ENCODE measurements at regions of chr18 and their contacts with region 1.

Region 1: DNA sequence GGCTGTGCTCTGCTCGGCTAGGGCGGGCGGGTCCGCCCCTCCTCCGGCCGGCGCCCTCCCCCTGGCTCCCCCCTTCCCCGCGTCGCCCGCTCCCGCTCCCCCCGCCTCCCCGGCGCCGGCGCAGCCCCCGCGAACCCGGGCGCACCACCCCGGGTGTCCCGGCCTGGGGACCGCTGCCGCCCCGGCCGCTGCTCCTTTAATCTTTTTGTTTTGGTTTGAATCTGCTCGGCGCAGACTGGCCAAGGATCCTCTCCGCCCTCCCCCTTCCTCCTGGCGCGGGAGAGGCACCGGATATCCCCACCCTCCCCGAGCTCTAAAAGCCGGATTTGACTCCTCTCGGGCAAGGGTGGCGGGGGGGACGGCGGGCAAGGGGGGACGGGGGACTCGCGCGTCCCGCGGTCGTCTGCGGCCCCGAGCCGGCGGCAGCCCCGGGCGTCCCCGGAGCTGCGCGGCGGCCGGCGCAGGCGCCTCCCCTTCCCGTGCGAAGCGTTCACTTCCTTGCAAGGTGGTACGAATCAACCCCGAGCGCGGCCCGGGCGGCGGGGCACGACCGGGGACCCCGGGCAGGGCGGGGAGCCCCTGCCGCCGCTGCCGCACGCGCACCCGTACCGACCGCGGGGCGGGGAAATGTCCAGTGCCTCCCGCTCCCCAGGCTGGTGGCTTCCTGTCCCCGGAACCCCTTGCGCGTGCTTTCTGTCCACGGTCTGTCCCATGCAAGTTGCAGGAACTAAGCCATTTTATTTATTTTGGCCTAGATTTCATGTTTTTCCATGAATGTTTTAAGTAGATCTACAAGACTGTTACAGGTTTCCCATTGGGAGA is at the start of gene PTGR3:
- DNase-seq: peak; percentile 94
- H3K4me3 ChIP-seq: peak within 1 kb of the TSS; percentile 72 to 100 (median 86)
- H3K27ac ChIP-seq: peak within 1 kb of the TSS; percentile 98 to 99 (median 98)
- H3K4me1 ChIP-seq: peaks cover 0 to 62% (median 42%) of the 10 kb centered on the region in 4 donors
- H3K27me3 ChIP-seq: no peaks in the 10 kb centered on the region
- CTCF ChIP-seq: no peak
- EP300 ChIP-seq: no peak
- POLR2A ChIP-seq: no peak
- total RNA-seq, gene PTGR3: 24.3 to 33.8 (median 25.4) TPM

Region 2: GRCh38 chr18:74597662-74598349 is 611.5 kb before region 1 on chr18 and contains the start of gene ZNF407:
- intact Hi-C with region 1: loop called (anchors 5 kb)
- DNase-seq: peak; percentile 93
- H3K4me3 ChIP-seq: peak within 1 kb of the TSS; percentile 56 to 97 (median 78)
- H3K27ac ChIP-seq: peak within 1 kb of the TSS; percentile 92 to 99 (median 96)
- H3K4me1 ChIP-seq: peaks cover 0 to 41% (median 30%) of the 10 kb centered on the region in 4 donors
- H3K27me3 ChIP-seq: no peaks in the 10 kb centered on the region
- CTCF ChIP-seq: no peak
- EP300 ChIP-seq: no peak
- POLR2A ChIP-seq: peak in 1 of 2 donors; percentile 21
- total RNA-seq, gene ZNF407: 16.3 to 19.8 (median 18.1) TPM

Region 3: DNA sequence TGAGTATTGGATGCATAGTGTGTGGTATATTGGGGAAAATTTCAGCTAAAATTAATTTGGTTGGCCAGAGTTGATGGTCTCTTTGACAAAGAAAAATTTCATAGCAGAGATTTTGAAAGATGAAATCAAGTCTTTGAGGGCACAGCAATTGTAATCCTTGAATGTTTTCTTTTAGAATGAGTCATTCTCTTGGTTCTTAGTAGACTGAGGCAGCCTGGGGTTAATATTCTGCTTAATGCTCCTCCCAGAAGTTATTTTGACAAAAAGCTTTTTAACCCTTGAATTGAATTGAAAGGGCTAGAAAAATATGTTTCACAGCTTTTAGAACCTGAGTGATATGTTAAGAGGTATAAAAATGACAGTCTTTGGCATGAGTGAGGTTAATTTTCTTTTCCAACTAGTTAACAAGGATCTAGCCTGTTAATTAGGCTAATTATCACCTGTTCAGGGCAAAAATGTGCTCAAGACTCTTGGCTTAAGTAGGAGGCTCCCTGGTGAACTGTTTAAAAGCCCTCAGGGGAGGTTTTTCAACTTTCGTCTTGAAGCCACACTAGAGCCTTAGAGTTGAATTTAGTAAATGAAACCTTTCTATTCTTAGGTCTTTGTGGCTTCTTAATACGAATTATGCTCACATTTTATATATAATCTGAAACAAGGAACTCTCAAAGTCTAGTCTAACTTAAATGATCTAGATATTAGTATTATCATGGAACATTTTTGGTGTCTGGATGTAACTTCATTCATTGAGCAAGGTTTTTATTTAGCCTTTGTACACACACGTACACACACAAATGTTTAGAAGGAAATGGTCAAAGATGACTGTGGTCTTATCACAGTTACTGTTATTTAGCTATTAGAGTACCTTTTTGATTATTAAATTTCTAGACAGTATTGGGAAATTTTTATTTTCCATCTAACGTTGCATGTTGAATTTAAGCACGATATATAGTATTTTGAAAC is 339.2 kb before region 1 on chr18:
- intact Hi-C with region 1: loop called (anchors 10 kb)
- DNase-seq: no peak
- H3K4me3 ChIP-seq: no peak overlapping the region
- H3K27ac ChIP-seq: no peak overlapping the region
- H3K4me1 ChIP-seq: peaks cover 0 to 27% (median 0%) of the 10 kb centered on the region in 4 donors
- H3K27me3 ChIP-seq: no peaks in the 10 kb centered on the region
- CTCF ChIP-seq: no peak
- EP300 ChIP-seq: no peak
- POLR2A ChIP-seq: no peak

Region 4: DNA sequence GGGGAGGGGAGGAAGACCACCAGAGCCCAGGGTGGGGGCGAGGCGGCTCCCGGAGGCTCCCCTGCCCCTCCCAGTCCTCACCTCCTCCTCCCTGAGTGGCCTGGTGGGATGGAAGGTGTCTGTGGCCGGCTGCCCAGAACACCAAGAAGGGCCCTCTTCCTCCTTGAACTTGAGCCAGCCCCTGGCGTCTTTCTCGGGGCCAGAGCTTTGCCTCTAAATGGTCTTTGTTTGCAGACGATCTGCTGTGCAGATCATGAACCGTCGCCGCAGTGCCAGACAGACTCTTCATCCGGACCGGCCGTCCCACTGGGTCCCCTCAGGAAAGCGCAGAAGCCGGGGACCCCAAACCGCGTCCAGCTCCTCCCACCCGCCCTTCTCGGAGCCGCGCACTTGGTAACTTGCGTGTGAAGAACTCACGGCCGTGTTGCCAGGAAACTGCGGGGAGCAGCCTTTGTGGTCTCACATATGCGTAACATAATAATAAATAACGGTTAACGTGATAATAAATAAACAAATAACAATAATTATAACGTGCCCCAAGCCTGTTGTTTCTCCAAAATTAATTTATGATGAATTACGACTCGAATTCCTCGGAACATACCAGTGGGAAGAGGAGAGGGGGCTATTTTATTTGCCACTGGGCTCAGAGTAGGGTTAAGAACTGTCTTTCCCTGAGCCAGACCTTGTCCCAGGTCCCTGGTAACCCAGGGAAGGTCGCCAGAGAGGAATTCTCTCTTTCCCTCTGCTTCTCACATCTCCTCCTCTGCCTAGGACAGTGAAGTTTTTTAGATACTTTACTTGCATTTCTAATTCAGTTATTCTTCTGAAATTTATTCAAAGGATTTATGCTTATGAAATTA is 41.4 kb before region 1 on chr18:
- intact Hi-C with region 1: loop called (anchors 2 kb)
- DNase-seq: peak; percentile 94
- H3K4me3 ChIP-seq: peak overlapping the region; percentile 35 to 49 (median 42)
- H3K27ac ChIP-seq: peak overlapping the region; percentile 77 to 85 (median 82)
- H3K4me1 ChIP-seq: peaks cover 0 to 9% (median 0%) of the 10 kb centered on the region in 4 donors
- H3K27me3 ChIP-seq: no peaks in the 10 kb centered on the region
- CTCF ChIP-seq: no peak
- EP300 ChIP-seq: no peak
- POLR2A ChIP-seq: peak in 1 of 2 donors; percentile 10

Region 5: DNA sequence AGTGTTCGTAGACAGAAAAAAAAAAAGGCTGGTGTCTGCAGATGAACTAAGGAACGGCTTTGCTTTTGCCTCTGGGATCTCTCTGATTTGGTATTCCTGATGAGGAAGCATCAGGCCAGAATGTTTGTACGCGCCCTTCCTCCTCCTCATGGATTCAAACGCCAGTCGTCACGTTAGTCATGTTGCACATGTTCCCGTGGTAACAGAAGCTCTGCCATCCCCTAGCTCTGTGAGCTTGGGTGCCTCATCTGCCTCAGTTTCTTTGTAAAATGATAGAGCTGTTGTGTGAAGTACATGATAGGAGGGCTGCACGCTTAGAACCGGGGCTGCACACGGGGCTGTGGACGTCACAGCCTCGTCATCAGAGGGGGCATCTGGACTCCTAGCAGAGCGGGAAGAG is 48.3 kb after region 1 on chr18:
- intact Hi-C with region 1: no loop called
- DNase-seq: no peak
- H3K4me3 ChIP-seq: no peak overlapping the region
- H3K27ac ChIP-seq: no peak overlapping the region
- H3K4me1 ChIP-seq: peaks cover 0 to 73% (median 37%) of the 10 kb centered on the region in 4 donors
- H3K27me3 ChIP-seq: no peaks in the 10 kb centered on the region
- CTCF ChIP-seq: no peak
- EP300 ChIP-seq: no peak
- POLR2A ChIP-seq: no peak

Region 6: DNA sequence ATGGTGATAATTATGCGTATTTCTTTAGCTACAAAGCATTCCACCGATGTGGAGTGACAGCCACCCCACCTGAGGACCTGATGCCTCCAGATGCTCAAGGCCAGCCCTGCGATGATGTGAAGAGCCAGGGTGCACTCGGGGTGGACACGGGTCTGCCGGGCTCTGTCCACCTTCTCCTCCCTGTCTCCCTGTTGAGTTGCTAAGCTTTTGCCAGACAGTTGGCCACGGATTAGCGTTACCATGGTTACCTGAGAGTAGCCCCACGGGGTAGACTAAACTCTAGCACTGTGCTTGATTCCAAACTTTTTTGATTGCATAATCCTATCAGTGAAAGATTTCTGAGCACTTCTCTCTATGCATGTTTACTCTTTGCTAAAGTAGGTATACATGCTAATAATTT is 131.9 kb after region 1 on chr18:
- intact Hi-C with region 1: no loop called
- DNase-seq: no peak
- H3K4me3 ChIP-seq: no peak overlapping the region
- H3K27ac ChIP-seq: no peak overlapping the region
- H3K4me1 ChIP-seq: no peaks in the 10 kb centered on the region
- H3K27me3 ChIP-seq: no peaks in the 10 kb centered on the region
- CTCF ChIP-seq: no peak
- EP300 ChIP-seq: no peak
- POLR2A ChIP-seq: no peak

Region 7: GRCh38 chr18:75455249-75456198 is 246.2 kb after region 1 on chr18:
- intact Hi-C with region 1: loop called (anchors 5 kb)
- DNase-seq: no peak
- H3K4me3 ChIP-seq: peak overlapping the region; percentile 21 to 66 (median 64)
- H3K27ac ChIP-seq: peak overlapping the region; percentile 56 to 74 (median 66)
- H3K4me1 ChIP-seq: peaks cover 0 to 17% (median 12%) of the 10 kb centered on the region in 4 donors
- H3K27me3 ChIP-seq: no peaks in the 10 kb centered on the region
- CTCF ChIP-seq: no peak
- EP300 ChIP-seq: no peak
- POLR2A ChIP-seq: no peak

Region 8: GRCh38 chr18:76349067-76349715 is 1139.9 kb after region 1 on chr18:
- intact Hi-C with region 1: loop called (anchors 5 kb)
- DNase-seq: peak; percentile 85
- H3K4me3 ChIP-seq: peak overlapping the region in 1 of 4 donors; percentile 13
- H3K27ac ChIP-seq: no peak overlapping the region
- H3K4me1 ChIP-seq: peaks cover 2 to 29% (median 28%) of the 10 kb centered on the region in 4 donors
- H3K27me3 ChIP-seq: no peaks in the 10 kb centered on the region
- CTCF ChIP-seq: peak; percentile 67 to 90 (median 84)
- EP300 ChIP-seq: no peak
- POLR2A ChIP-seq: no peak